ENCODE measurements at regions of chr16 and their contacts with region 1.

Region 1: DNA sequence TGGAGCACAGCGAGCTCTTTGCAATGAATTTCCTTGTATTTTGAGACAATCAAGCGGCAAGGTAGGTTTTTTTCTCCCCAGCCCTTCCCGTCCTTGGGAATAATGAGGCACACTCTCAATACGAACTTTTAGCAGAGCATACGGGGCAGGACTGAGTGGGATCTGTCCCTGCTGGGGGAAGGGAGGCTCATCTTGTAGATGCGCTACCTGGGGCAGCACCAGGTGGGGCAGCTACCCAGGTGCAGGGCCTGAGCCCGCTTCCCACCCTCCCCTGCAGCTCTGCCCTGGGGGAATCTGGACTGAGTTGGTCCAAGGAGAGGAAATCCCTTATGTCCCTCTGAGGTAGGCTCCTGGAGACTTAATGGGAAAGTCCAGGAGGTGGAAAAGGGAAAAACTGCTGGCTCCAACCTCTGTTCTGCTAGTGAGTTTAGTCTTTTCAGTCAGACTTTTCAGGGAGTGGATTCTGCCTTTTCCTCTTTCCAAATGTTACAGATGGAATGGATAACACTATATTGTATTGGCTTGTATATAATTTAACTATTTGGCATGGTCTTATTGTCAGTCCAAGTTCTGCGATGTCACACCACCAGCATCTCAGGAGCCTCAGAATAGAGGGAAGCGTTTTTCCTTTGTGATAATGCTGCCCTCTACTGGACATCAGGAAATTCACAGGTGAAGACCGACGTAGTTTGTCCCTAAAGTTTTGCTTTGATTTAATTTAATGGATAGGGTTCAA is 9.6 kb upstream of the CES1 start:
- DNase-seq: no peak
- ATAC-seq: peak; percentile 77

Region 2: GRCh38 chr16:55465077-55465896 is 377.2 kb before region 1 on chr16:
- intact Hi-C with region 1: loop called (anchors 10 kb)
- DNase-seq: peak; percentile 95
- ATAC-seq: peak; percentile 92

Region 3: GRCh38 chr16:55526441-55526840 is 316.1 kb before region 1 on chr16:
- intact Hi-C with region 1: no loop called
- DNase-seq: no peak
- ATAC-seq: no peak

Region 4: GRCh38 chr16:55711959-55712876 is 130.3 kb before region 1 on chr16:
- intact Hi-C with region 1: loop called (anchors 10 kb)
- DNase-seq: peak; percentile 85
- ATAC-seq: peak; percentile 83

Region 5: GRCh38 chr16:55760310-55761001 is 82.1 kb before region 1 on chr16:
- intact Hi-C with region 1: no loop called
- DNase-seq: no peak
- ATAC-seq: peak; percentile 91

Region 6: DNA sequence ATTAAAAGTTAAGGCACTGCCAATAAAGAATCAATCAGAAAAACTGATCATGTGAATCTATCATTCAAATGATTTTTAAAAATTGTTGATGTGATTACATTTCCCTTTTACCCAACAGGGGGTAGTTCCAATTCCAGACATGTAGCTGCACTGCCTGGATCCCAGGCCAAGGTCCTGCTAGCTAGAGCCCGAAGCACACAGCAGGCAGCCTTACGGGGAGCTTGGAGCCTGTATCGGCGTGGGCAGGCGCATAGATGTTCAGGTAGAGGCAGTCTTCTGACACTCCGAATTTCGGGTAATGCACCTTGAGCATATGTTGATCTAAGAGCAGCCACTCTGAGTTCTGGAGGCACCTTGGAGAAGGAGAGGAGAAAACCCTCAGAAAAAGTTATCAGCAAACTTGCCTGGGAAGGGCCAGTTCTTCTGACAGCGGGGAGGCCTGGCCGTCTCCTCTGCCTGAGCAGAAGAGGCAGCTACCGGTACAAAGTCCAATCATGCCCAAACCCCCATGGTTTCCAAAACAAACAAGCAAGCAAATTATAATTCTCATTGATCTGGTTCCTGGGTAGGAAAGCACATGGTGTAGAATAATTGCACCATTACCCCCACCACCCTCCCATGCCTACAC is 29.0 kb after region 1 on chr16:
- intact Hi-C with region 1: no loop called
- DNase-seq: no peak
- ATAC-seq: no peak

Region 7: DNA sequence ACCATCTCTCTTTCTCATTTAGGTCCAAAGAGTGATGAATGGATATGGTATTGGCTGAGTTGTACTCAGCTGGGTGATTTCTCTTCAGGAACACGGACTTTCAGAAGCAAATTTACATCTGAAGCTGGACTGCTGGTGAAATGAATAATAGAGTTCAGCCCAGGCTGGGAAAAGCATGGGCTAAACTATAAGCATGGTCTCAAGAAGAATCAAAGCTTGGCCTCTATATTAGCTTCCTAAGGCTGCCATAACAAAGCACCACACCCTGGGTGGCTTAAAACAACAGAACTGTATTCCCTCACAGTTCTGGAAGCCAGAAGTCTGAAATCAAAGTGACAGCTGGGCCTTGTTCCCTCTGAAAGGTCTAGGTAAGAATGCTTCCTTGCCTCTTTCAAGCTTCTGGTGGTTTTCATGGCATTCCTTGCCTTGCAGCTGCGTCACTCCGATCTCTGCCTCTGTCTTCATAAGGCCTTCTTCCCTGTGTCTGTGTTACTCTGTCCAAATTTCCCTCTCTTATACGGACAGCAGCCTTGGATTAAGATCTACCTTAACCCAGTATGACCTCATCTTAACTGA is 122.5 kb after region 1 on chr16:
- intact Hi-C with region 1: no loop called
- DNase-seq: no peak
- ATAC-seq: no peak